ENCODE measurements at regions of chr11 and their contacts with region 1.

Region 1: GRCh38 chr11:130124096-130124495 is 35.5 kb upstream of the ST14 start:
- DNase-seq: peak; percentile 87 to 90
- H3K4me3 ChIP-seq: no peak overlapping the region
- H3K27ac ChIP-seq: peak overlapping the region; percentile 56 to 71
- H3K4me1 ChIP-seq: peaks cover 0 to 38% (median 15%) of the 10 kb centered on the region in 4 donors
- H3K27me3 ChIP-seq: no peaks in the 10 kb centered on the region
- CTCF ChIP-seq: no peak

Region 2: GRCh38 chr11:130002846-130003716 is 121.0 kb before region 1 on chr11:
- intact Hi-C with region 1: loop called (anchors 5 kb)
- DNase-seq: peak; percentile 93 to 98
- H3K4me3 ChIP-seq: peak overlapping the region; percentile 91 to 92
- H3K27ac ChIP-seq: peak overlapping the region; percentile 98 to 100
- H3K4me1 ChIP-seq: peaks cover 0 to 24% (median 18%) of the 10 kb centered on the region in 4 donors
- H3K27me3 ChIP-seq: no peaks in the 10 kb centered on the region
- CTCF ChIP-seq: peak in 1 of 2 experiments; percentile 5

Region 3: DNA sequence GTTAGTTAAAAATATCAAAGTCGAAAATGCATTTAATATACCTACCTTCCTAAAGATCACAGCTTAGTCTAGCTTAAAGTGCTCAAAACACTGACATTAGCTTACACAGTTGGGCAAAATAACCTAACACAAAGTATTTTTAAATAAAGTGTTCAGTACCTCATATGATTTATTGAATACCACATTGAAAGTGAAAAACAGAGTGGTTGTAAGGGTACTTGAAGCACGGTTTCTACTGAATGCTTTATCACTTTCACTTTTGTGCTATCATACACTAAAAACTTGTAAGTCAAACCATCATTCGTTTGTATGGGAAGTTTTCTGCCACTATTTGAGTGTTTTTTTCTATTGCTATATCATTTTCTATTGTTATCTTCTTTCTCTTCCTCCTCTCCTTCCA is 154.1 kb after region 1 on chr11:
- intact Hi-C with region 1: no loop called
- DNase-seq: no peak
- H3K4me3 ChIP-seq: no peak overlapping the region
- H3K27ac ChIP-seq: no peak overlapping the region
- H3K4me1 ChIP-seq: no peaks in the 10 kb centered on the region
- H3K27me3 ChIP-seq: no peaks in the 10 kb centered on the region
- CTCF ChIP-seq: no peak